GM10248 (cell line): ENCODE measurements at regions of chr7 and their contacts with region 1.

Region 1: DNA sequence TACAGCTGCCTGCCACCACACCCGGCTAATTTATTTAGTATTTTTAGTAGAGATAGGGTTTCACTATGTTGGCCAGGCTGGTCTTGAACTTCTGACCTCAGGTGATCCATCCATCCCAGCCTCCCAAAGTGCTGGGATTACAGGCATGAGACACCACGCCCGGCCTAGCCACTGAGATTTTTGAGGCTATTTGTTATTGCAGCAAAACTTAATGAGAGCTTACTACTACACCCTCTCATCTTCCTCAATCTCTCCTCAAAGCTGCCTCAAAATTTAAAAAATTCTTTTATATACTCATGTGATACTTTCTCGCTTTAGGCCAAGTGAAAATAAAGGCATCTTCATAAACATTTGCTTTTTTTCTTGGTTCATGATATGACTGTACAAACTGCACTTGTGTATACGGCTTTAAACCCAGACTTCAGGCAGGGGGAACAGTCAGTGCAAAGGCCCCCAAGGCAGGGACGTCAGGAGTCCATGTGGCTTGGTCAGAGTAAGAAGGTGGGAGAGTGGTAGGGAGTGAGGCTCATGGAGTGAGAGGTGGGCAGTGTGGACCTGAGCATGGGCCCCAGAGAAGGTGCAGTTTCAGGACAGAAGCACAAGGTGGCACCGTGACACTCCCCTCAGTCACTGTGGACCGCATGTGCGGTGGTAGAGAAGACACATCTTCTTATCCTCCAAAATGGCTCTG is 55.5 kb downstream of the SYPL1 start:
- DNase-seq: peak; percentile 82
- CTCF ChIP-seq: peak; percentile 94

Region 2: GRCh38 chr7:106071356-106071998 is 14.8 kb after region 1 on chr7:
- CTCF ChIA-PET with region 1: interaction called, 61 read pairs
- POLR2A ChIA-PET with region 1: no interaction called
- DNase-seq: peak; percentile 81
- CTCF ChIP-seq: no peak

Region 3: DNA sequence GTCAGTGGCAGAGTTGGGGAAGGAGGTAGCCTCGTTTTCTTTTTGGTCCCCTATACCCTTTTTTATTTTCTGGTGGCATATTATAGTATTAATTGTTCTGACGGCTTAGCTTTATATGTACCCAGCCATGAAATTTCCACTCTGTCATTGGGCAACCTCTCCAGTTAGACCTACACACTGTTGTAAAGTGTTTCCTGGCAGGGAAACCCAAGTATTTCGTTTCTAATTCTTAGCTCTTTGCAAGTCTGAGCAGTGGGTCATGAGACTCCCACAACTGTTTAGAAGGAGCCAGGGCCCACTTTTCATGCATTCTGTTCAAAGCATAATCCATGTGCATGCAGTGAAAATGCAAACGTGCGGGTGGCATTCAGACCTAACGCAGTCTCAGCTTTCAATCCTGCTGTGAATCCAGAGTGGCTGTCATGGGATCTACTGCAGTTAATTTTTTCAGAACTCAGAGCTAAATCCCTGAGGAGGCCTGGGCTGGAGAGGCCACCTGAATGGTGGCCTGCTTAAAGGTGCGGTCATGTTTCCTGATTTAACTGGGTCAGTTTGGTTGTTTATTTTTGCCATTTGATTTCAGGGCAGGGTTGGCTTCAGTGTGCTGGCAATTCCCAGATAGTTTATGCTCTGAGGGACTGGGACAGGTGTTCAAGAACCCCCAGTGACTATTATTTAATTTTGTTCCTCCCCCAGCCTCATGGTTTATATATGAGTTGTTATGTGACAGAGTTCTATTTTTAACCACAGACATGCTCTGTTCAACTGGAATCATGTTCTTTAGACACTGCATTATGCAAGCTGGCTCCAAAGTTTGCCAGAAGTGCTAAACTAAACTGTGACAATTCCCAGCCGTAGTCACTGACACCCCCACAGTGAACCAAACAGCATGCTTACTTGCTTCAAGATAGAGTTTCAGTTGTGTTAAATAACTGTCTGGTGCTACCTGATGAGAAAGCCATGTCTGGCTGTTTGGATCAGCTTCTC is 82.9 kb after region 1 on chr7:
- CTCF ChIA-PET with region 1: interaction called, 12 read pairs
- POLR2A ChIA-PET with region 1: no interaction called
- DNase-seq: no peak
- CTCF ChIP-seq: no peak